Activated CD4-positive, alpha-beta memory T cell treated with anti-CD3 and anti-CD28 coated beads, Interleukin-2, amount 10 ng/mL, durations not matched to agents 7 days and 5 days (primary cell): ENCODE measurements at regions of chr3 and their contacts with region 1.

Region 1: DNA sequence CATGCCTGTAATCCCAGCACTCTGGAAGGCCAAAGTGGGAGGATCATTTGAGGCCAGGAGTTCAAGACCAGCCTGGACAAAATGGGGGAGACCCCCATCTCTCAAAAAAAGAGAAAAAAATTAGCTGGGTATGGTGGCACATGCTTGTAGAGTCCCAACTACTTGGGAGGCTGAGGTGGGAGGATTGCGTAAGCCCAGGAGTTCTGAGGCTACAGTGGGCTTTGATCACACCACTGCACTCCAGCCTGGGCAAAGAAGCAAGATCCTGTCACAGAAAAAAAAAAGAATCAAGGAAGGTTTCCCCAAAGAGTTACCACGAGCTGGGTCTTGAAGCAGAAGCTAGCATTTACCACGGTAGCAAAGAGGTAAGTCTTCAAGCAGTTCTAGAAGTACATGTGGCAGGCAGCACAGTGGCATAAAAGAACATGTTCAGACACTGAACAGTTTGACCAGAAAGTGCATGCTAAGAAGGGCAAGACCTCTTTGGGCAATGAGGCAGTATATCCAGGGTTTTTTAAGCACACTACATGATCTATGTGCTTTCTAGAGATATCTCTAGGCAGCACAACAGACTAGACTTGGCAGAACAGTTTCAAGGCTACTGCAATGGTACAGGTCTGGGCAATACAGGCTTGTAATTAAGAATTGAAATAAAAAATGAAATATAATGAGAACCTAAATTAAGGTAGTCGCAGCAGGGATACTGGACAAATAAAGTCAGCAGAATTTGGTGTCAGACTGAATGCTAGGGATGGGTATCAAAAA is 418.5 kb downstream of the SHQ1 start:
- DNase-seq: no peak
- H3K4me3 Mint-ChIP-seq: no peak overlapping the region
- H3K27ac Mint-ChIP-seq: no peak overlapping the region
- H3K4me1 Mint-ChIP-seq: peaks cover 67% of the 10 kb centered on the region
- H3K27me3 Mint-ChIP-seq: no peaks in the 10 kb centered on the region

Region 2: GRCh38 chr3:72144773-72145505 is 284.8 kb before region 1 on chr3:
- CTCF ChIA-PET with region 1: no interaction called
- POLR2A ChIA-PET with region 1: no interaction called
- DNase-seq: no peak
- H3K4me3 Mint-ChIP-seq: no peak overlapping the region
- H3K27ac Mint-ChIP-seq: no peak overlapping the region
- H3K4me1 Mint-ChIP-seq: peaks cover 22% of the 10 kb centered on the region
- H3K27me3 Mint-ChIP-seq: no peaks in the 10 kb centered on the region

Region 3: GRCh38 chr3:72391659-72392058 is 38.1 kb before region 1 on chr3:
- CTCF ChIA-PET with region 1: no interaction called
- POLR2A ChIA-PET with region 1: no interaction called
- DNase-seq: no peak
- H3K4me3 Mint-ChIP-seq: no peak overlapping the region
- H3K27ac Mint-ChIP-seq: no peak overlapping the region
- H3K4me1 Mint-ChIP-seq: peaks cover 22% of the 10 kb centered on the region
- H3K27me3 Mint-ChIP-seq: no peaks in the 10 kb centered on the region

Region 4: GRCh38 chr3:72414481-72415016 is 15.2 kb before region 1 on chr3:
- CTCF ChIA-PET with region 1: no interaction called
- POLR2A ChIA-PET with region 1: no interaction called
- DNase-seq: no peak
- H3K4me3 Mint-ChIP-seq: no peak overlapping the region
- H3K27ac Mint-ChIP-seq: no peak overlapping the region
- H3K4me1 Mint-ChIP-seq: peaks cover 63% of the 10 kb centered on the region
- H3K27me3 Mint-ChIP-seq: no peaks in the 10 kb centered on the region

Region 5: DNA sequence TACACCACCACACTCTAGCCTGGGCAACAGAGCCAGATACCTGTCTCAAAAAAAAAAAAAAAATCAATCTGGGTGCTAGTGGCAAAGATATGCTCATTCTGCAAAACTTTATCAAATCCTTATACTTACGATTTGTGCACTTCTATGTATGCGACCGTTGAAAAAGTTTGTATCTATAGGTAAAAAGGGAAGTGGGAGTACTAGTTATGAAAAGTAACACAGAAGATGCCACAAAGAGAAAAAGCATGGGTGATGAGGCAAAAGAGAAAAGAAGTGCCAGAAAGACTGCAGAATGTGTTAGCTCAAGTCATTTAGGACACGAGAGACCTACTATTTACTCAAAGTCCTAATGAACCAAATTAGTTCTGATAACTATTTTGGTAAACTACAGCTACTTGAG is 10.7 kb after region 1 on chr3:
- CTCF ChIA-PET with region 1: no interaction called
- POLR2A ChIA-PET with region 1: interaction called, 10 read pairs
- DNase-seq: no peak
- H3K4me3 Mint-ChIP-seq: no peak overlapping the region
- H3K27ac Mint-ChIP-seq: no peak overlapping the region
- H3K4me1 Mint-ChIP-seq: peaks cover 83% of the 10 kb centered on the region
- H3K27me3 Mint-ChIP-seq: no peaks in the 10 kb centered on the region